Activated B cell treated with CpG ODN at 0.5 μM for 24 hours (primary cell): ENCODE measurements at regions of chr2 and their contacts with region 1.

Region 1: GRCh38 chr2:135531231-135532228 is at the start of gene R3HDM1:
- DNase-seq: peak; percentile 82
- ATAC-seq: peak; percentile 81
- H3K4me3 Mint-ChIP-seq: no peak within 1 kb of the TSS
- H3K27ac Mint-ChIP-seq: peak within 1 kb of the TSS; percentile 68
- H3K4me1 Mint-ChIP-seq: peaks cover 18% of the 10 kb centered on the region
- H3K27me3 Mint-ChIP-seq: no peaks in the 10 kb centered on the region
- CTCF ChIP-seq: no peak
- total RNA-seq, gene R3HDM1: 49.8 and 54.8 TPM in 2 replicates

Region 2: DNA sequence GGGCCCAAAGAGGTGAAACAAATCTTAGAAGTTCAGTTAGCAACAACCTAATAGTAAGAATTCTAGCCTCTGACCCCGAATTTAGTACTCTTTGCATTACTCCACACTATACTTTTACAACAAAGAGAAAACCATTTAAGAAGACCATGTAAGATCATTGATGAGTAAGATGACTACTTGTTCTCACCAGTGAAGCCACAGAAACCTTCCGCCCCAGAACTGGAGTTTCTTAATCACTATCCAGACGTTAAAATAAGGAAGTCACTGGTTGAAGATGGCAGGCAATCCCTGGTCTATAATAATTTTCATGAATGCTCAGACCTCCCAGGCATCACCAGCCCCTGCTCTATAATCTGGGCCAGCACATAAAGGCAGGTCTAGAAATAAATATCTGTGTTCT is 907.7 kb before region 1 on chr2:
- CTCF ChIA-PET with region 1: no interaction called
- POLR2A ChIA-PET with region 1: no interaction called
- intact Hi-C with region 1: loop called (anchors 5 kb)
- DNase-seq: no peak
- ATAC-seq: peak; percentile 69
- H3K4me3 Mint-ChIP-seq: peak overlapping the region; percentile 71
- H3K27ac Mint-ChIP-seq: peak overlapping the region; percentile 91
- H3K4me1 Mint-ChIP-seq: peaks cover 28% of the 10 kb centered on the region
- H3K27me3 Mint-ChIP-seq: no peaks in the 10 kb centered on the region
- CTCF ChIP-seq: no peak

Region 3: DNA sequence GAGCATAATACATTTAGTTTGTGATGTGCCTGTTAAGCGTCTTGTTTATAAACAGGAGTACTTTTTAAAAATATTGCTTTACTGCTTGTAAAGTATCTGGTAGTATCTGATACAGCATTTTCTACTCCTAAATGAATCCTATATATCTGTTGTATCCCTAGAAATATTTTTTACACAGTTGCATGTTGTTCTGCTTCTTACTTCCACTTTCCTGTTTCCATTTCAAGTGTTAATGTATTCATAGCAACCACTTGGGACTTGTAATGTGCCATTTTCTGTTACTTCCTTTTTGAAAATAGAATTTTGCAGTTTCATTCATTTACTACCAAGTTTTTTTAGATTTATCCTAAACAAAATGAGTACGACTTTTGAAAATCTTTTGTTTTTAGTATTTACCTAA is 588.0 kb before region 1 on chr2:
- CTCF ChIA-PET with region 1: no interaction called
- POLR2A ChIA-PET with region 1: no interaction called
- intact Hi-C with region 1: loop called (anchors 5 kb)
- DNase-seq: no peak
- ATAC-seq: peak; percentile 57
- H3K4me3 Mint-ChIP-seq: peak overlapping the region; percentile 11
- H3K27ac Mint-ChIP-seq: peak overlapping the region; percentile 75
- H3K4me1 Mint-ChIP-seq: peaks cover 32% of the 10 kb centered on the region
- H3K27me3 Mint-ChIP-seq: no peaks in the 10 kb centered on the region
- CTCF ChIP-seq: no peak

Region 4: DNA sequence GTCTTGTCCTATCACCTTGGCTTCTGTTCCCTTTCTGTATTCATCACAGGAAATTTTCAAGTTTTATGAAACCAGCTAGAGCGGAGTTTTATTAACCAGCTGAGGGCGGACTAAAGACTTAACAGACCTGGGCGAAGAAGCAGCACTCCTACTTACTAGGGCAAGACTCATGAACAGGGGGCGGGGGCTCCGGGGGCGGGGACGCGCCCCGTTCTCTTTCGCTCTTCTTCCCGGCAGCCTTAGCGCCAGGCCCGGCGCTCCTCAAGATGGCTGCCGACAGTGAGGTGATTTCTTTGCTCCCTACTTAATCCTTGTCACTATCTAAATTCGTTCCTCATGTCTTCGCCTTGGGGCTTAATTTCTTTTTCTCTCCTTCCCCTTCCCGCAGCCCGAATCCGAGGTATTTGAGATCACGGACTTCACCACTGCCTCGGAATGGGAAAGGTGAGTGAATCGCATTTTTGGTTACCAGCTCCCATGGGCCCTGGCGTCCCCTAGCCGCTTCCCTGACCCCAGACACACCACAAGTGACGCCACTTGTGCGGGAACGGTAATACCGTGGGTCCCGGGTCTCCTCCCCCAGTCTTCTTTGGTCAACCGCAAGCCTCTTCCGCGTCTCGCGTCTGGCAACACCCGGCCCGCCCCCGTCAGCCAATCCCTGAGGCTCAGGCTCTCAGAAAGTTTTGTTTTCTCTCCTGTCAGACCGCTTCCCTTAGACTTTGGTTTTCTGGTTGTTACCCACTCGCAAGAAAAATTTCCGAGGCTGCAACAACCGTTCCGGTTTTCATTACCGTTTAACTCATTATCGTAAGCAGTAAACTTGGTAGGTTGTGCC is 479.3 kb before region 1 on chr2 and contains the start of gene RAB3GAP1:
- CTCF ChIA-PET with region 1: no interaction called
- POLR2A ChIA-PET with region 1: interaction called, 3 read pairs
- intact Hi-C with region 1: loop called (anchors 1 kb)
- DNase-seq: peak; percentile 72
- ATAC-seq: peak; percentile 89
- H3K4me3 Mint-ChIP-seq: peak within 1 kb of the TSS; percentile 99
- H3K27ac Mint-ChIP-seq: peak within 1 kb of the TSS; percentile 99
- H3K4me1 Mint-ChIP-seq: peaks cover 40% of the 10 kb centered on the region
- H3K27me3 Mint-ChIP-seq: no peaks in the 10 kb centered on the region
- CTCF ChIP-seq: no peak
- total RNA-seq, gene RAB3GAP1: 46.3 and 51.0 TPM in 2 replicates

Region 5: DNA sequence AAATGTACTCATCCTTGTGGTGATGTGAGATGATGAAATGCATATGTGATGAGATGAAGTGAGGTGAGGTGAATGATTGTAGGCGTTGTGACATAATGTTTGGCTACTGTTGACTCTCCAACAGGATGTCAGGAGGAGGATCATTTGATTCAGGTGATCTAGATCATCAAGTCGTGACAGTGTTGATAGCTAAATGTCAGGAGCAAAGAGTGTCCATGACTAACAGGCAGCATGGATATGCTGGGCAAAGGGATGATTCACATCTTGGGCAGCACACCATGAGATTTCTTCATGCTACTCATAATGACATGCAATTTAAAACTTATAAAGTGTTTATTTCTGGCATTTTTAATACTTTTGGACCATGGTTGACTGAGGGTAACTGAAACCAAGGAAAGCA is 169.9 kb after region 1 on chr2:
- CTCF ChIA-PET with region 1: no interaction called
- POLR2A ChIA-PET with region 1: no interaction called
- intact Hi-C with region 1: no loop called
- DNase-seq: no peak
- ATAC-seq: no peak
- H3K4me3 Mint-ChIP-seq: no peak overlapping the region
- H3K27ac Mint-ChIP-seq: no peak overlapping the region
- H3K4me1 Mint-ChIP-seq: no peaks in the 10 kb centered on the region
- H3K27me3 Mint-ChIP-seq: no peaks in the 10 kb centered on the region
- CTCF ChIP-seq: no peak

Region 6: DNA sequence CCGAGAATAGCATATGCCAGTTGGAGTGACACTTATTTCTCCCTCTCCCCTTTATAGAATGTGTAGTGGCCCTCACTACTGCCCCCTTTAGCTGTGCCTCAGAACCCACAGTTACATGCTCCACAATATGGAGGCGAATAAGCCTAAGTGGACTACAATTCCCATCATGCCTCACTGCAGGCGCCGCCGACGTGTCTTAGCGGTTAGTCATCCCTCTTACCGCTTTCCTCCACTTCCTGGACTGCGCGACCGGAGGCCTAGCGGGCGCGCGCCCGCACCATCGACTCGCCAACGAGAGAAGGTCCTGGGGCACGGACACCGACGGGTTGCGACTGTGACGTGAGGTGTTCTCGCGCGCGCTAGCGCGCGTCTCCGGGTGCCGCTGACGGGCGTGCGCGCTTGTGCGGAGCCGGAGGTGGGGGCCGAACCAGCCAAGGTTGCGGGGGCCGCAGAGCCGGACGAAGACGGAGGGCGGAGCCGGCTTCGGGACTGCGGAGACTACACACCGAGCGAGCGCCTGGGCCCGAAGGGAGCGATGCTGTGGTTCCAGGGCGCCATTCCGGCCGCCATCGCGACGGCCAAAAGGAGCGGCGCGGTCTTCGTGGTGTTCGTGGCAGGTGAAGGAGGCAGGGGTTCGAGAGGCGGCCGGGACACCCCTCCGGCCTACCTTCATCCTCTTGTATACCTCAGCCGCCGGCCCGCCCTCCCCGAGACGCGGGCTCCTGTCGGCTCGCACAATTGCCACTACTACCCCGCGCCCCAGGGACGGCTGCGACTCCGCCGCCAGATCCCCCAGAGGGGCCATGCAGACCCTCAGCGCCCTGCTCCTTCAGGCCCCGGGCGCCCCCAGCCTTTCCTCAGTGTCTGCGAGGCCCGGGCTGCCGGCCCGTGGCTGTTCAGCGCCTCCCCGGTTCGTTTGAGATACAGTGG is 210.1 kb after region 1 on chr2 and contains the start of gene UBXN4:
- CTCF ChIA-PET with region 1: no interaction called
- POLR2A ChIA-PET with region 1: interaction called, 10 read pairs
- intact Hi-C with region 1: loop called (anchors 1 kb)
- DNase-seq: peak; percentile 81
- ATAC-seq: peak; percentile 87
- H3K4me3 Mint-ChIP-seq: peak within 1 kb of the TSS; percentile 99
- H3K27ac Mint-ChIP-seq: peak within 1 kb of the TSS; percentile 99
- H3K4me1 Mint-ChIP-seq: peaks cover 40% of the 10 kb centered on the region
- H3K27me3 Mint-ChIP-seq: no peaks in the 10 kb centered on the region
- CTCF ChIP-seq: no peak
- total RNA-seq, gene UBXN4: 87.8 and 107 TPM in 2 replicates

Region 7: GRCh38 chr2:135876066-135876711 is 344.7 kb after region 1 on chr2 and contains the start of gene MCM6:
- CTCF ChIA-PET with region 1: no interaction called
- POLR2A ChIA-PET with region 1: interaction called, 4 read pairs
- intact Hi-C with region 1: loop called (anchors 1 kb)
- DNase-seq: peak; percentile 87
- ATAC-seq: peak; percentile 90
- H3K4me3 Mint-ChIP-seq: peak within 1 kb of the TSS; percentile 95
- H3K27ac Mint-ChIP-seq: peak within 1 kb of the TSS; percentile 90
- H3K4me1 Mint-ChIP-seq: peaks cover 24% of the 10 kb centered on the region
- H3K27me3 Mint-ChIP-seq: no peaks in the 10 kb centered on the region
- CTCF ChIP-seq: no peak
- total RNA-seq, gene MCM6: 27.9 and 28.9 TPM in 2 replicates

Region 8: DNA sequence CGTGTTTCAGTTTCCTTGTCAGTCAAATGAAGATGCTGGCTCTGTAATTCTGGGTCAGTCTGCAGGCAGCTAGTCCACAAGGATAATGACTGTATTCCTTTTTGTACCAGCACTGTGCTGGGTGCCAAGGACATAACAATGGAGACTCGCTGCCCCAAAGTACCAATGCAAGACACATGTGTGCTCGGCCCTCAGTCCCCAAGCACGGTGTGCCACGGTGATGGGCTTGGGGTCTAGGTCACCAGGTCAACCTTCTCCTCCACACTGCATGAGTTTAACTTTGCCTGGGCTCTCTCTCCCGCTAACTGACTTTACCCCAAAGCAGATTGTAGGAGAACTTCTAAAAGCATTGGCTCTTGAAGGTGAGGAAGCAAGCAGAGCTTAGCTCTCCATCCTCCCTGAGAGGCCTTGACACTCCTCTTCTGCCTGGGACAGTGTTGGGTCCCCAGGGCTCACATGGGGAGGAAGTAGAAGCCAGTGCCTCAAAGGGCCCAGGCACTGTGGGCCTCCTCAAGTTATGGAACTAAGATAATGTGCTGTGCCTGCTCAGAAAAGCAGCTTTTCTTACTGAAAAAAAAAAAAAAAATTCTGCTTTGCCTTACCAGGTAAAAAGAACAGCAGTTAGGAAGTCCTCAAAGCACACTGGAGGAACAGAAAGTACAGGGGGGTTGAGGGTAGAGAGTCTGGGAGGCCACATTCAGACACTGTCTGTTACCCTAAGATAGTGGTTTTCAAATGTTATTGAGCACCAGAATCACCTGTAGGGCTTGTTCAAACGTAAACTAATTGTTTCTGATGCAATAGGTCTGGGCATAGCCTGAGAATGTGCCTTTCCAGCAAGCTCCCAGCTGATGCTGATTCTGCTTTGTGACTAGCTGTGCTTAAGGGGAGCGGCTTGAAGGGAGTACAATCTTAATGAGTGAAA is 862.9 kb after region 1 on chr2:
- CTCF ChIA-PET with region 1: no interaction called
- POLR2A ChIA-PET with region 1: no interaction called
- intact Hi-C with region 1: loop called (anchors 1 kb)
- DNase-seq: no peak
- ATAC-seq: peak; percentile 41
- H3K4me3 Mint-ChIP-seq: peak overlapping the region; percentile 11
- H3K27ac Mint-ChIP-seq: peak overlapping the region; percentile 69
- H3K4me1 Mint-ChIP-seq: peaks cover 63% of the 10 kb centered on the region
- H3K27me3 Mint-ChIP-seq: no peaks in the 10 kb centered on the region
- CTCF ChIP-seq: no peak